ENCODE measurements at regions of chr6 and their contacts with region 1.

Region 1: DNA sequence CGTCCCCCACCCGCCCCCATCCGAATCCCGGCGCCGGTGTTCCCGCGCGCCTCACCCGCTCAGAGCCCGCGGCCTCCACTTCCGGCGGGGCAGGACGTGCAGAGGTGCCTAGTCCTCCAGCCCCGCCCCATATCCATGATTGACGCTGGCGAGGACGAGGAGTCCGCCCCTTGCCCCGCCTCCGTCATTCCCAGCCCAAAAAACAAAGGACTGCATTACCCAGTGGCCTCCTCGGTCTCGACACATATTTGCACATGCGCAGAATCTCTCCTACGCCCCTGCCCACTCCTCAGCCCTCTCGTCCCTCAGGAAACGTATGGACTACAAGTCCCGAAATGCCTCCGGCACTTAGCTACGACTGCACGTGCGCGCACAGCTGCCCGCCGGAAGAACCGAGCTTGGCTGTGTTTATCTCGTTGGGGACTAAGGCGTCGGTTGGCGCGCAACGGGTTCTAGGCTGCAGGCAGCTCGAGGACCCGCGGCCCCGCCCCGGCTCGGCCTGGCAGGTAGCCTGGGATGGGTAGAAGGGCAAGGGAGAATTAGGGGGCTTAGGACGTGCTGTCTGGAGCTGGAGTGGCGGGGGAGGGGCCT is at the starts of genes KLHDC3 and MEA1:
- DNase-seq: peak; percentile 99
- ATAC-seq: peak; percentile 92
- H3K4me3 ChIP-seq: peak within 1 kb of the TSS; percentile 91
- H3K27ac ChIP-seq: peak within 1 kb of the TSS; percentile 17; the same call in 1 of the 2 replicates
- H3K4me1 ChIP-seq: peaks cover 23% of the 10 kb centered on the region
- H3K27me3 ChIP-seq: no peaks in the 10 kb centered on the region
- CTCF ChIP-seq: no peak
- total RNA-seq, gene KLHDC3: 68.9 and 76.0 TPM in 2 replicates
- total RNA-seq, gene MEA1: 131 and 146 TPM in 2 replicates

Region 2: DNA sequence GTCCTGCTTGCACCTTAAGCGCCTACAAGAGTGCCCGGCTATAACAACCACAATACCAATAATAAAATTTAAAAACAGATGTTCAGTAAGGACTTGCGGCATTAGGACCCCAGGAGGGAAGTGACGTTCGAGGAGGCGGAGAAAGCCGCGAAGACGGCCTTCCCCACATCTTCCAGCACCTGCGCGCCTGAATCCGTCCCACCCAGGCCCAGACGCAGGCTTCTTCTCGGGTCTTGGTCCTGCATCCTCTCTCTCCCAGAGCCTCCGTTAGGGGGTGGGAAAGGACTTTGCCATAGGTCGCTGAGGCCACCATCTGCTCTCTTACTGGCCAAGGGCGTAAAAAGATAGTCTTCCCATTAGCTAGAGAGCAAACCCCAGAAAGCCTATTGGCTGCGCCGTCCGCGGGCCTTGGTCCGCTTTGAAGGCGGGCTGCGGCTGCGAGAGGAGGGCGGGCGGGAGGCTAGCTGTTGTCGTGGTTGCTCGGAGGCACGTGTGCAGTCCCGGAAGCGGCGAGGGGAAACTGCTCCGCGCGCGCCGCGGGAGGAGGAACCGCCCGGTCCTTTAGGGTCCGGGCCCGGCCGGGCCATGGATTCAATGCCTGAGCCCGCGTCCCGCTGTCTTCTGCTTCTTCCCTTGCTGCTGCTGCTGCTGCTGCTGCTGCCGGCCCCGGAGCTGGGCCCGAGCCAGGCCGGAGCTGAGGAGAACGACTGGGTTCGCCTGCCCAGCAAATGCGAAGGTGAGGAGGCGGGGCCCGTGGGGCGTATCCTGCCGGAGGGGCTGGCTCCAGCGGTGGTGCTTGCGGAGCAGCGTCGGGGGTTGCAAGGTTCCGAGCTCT is 84.7 kb before region 1 on chr6 and contains the start of gene CNPY3:
- CTCF ChIA-PET with region 1: no interaction called
- POLR2A ChIA-PET with region 1: interaction called, 14 read pairs
- intact Hi-C with region 1: no loop called
- DNase-seq: peak; percentile 97
- ATAC-seq: peak; percentile 88
- H3K4me3 ChIP-seq: peak within 1 kb of the TSS; percentile 86
- H3K27ac ChIP-seq: peak within 1 kb of the TSS; percentile 79
- H3K4me1 ChIP-seq: peaks cover 12% of the 10 kb centered on the region; the same call in 1 of the 2 replicates
- H3K27me3 ChIP-seq: no peaks in the 10 kb centered on the region
- CTCF ChIP-seq: no peak
- total RNA-seq, gene CNPY3: 37.5 and 42.2 TPM in 2 replicates

Region 3: DNA sequence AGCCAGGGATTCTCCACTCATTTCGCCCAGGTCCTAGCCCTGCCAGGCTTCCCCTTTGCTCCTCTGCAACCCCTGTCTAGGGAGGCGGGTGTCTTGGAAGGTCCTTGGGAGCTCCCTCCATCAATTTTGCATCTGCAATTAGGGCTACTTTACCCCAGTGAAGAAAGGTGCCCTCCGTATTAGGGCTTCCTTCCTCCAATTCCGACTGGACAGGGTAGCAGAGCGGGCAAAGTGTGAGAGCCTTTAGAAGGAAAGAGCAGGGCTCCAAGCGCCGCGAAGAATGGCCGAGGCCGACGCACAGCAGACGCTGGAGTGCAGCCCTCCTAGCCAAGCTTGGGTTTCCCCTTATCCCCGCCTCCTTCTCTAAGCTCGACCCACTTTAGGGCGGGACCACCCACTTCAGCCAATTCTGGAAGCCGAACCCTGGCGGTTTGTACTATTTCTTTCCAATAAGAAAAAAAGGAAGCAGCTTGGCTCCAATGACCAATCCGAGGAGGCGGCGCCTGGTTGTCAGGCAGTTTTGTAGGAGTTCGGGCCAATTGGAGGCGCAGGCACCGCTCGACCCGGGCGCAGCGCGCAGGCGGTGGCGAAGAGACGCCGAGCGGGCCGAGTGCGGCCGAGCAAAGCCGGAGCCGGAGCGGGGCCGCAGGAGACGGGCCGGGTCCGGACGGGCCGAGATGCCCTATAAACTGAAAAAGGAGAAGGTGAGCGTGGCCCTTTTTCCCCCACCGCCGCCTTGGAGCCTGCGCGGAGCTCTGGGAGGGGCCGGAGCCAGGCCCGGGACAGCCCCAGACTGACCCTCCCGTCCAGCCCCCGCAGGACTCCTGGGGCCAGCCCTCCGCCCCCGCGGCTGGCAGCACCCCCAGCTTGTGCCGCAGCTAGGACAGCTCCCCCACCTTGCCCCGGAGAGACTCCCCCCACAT is 29.7 kb before region 1 on chr6 and contains the start of gene PPP2R5D:
- CTCF ChIA-PET with region 1: no interaction called
- POLR2A ChIA-PET with region 1: interaction called, 11 read pairs
- intact Hi-C with region 1: loop called (anchors 2 kb)
- DNase-seq: peak; percentile 99
- ATAC-seq: peak; percentile 91
- H3K4me3 ChIP-seq: peak within 1 kb of the TSS; percentile 82
- H3K27ac ChIP-seq: peak within 1 kb of the TSS; percentile 12; the same call in 1 of the 2 replicates
- H3K4me1 ChIP-seq: peaks cover 32% of the 10 kb centered on the region
- H3K27me3 ChIP-seq: no peaks in the 10 kb centered on the region
- CTCF ChIP-seq: no peak
- total RNA-seq, gene PPP2R5D: 54.1 and 55.6 TPM in 2 replicates

Region 4: DNA sequence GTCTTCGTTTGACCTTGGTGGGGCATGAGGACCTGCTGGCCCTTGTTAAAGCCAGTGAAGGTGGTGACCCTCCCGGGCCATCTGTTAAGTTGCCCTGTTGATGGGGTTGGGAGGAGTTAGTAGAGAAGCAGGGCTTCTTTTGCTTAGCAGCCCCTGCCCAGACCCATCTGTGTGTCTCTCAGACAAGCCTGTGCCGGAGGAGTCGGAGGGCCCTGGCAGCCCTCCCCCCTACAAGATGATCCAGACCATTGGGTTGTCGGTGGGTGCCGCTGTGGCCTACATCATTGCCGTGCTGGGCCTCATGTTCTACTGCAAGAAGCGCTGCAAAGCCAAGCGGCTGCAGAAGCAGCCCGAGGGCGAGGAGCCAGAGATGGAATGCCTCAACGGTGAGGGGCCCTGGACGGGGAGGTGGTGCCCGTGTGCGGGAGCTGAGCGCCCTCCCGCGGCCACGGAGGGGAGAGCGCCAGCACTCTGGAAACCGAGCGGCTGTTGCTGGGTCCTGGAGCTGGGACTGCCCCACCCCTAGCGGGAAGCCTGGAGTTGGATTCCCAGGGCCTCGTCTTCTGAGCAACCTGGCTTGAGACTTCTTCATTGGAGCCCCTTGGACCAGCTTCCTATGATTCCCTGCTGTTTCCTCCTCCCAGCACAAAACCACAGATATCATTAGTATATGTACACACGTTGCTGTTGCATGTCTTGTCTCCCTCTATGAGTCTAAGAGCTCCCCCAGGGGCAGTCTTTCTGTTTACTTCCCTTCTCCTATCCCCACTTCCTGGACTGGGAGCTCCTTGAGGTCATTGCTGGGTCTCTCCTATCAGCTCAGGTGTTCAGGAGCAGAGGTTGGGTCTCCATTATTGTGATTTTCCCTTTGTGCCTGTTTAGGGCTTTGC is 129.5 kb after region 1 on chr6:
- CTCF ChIA-PET with region 1: interaction called, 3 read pairs
- POLR2A ChIA-PET with region 1: no interaction called
- intact Hi-C with region 1: loop called (anchors 5 kb)
- DNase-seq: peak; percentile 91
- ATAC-seq: peak; percentile 96
- H3K4me3 ChIP-seq: no peak overlapping the region
- H3K27ac ChIP-seq: no peak overlapping the region
- H3K4me1 ChIP-seq: peaks cover 24% of the 10 kb centered on the region
- H3K27me3 ChIP-seq: no peaks in the 10 kb centered on the region
- CTCF ChIP-seq: peak; percentile 95

Region 5: DNA sequence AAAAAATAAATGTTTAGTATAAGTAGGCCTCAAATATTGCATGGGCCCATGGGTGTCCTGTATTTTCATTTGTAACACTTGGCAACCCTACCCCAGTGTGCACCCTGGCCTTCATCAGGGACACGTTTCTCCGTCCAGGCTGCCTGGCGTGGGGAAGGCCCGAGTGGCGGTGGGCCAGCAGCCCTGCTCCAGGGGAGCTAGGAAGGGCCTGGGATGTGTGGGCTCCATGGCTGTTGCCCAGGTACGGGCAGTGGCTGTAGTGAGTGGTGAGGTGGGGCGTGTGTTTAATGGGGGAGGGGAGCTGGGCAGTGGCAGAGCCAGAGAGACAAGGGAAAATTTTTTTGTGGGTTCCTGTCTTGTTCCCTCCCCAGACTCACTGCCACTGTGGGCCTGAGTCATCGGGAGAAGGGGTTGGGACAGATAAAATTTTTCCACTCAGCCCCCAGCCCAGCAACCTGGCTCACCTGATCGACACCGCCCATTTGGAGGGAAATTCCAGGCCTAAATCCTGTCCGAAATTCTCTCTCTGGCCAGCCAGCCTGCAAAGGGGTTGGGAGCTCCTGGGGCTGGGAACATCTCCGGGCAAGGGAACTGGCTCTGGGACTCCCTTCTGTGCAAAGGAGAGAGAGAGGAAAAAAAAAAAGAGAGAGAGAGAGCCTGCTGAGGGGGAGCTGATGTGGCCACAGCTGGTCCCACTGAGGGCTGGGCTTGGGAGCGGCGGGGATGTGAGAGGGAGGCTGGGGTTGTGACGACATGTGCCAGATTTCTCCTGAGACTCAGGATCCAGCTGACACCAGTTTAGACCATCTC is 723.5 kb after region 1 on chr6:
- CTCF ChIA-PET with region 1: no interaction called
- POLR2A ChIA-PET with region 1: interaction called, 15 read pairs
- intact Hi-C with region 1: no loop called
- DNase-seq: no peak
- ATAC-seq: peak; percentile 32; the same call in 1 of the 2 replicates
- H3K4me3 ChIP-seq: no peak overlapping the region
- H3K27ac ChIP-seq: no peak overlapping the region
- H3K4me1 ChIP-seq: peaks cover 9% of the 10 kb centered on the region
- H3K27me3 ChIP-seq: no peaks in the 10 kb centered on the region
- CTCF ChIP-seq: no peak